ENCODE measurements at regions of chr1 and their contacts with region 1.

Region 1: DNA sequence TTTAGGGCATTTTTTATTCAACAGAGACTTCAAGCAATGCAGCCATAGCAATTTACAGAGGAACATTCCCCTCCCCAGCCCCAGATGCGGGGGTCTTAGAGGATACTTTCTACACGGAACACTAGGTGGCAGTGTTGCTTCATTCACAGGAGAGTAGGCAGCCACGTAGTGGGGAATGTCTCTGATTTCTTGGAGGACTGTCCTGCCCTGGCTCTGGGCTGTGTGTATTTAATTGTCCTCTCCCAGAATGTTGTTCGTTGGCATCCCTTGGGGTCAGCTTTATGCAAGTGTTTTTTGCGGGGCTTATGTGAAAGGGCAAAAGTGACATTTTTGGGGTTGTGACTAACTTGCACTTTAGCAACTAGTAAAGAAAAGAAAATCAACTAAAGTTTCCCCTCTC is 96.9 kb downstream of the PAPPA2 start:
- DNase-seq: peak in 1 of 2 donors; percentile 82
- H3K4me3 ChIP-seq: peak overlapping the region in 1 of 2 donors; percentile 11
- H3K27ac ChIP-seq: peak overlapping the region; percentile 53 to 65
- H3K4me1 ChIP-seq: peaks cover 3 to 15% of the 10 kb centered on the region in 2 donors
- H3K27me3 ChIP-seq: no peaks in the 10 kb centered on the region
- CTCF ChIP-seq: peak; percentile 79 to 98 (median 84)

Region 2: GRCh38 chr1:175192630-175193526 is 1367.0 kb before region 1 on chr1 and contains the start of gene KIAA0040:
- intact Hi-C with region 1: loop called (anchors 5 kb)
- DNase-seq: peak; percentile 37 to 91
- H3K4me3 ChIP-seq: peak within 1 kb of the TSS; percentile 58 to 77
- H3K27ac ChIP-seq: peak within 1 kb of the TSS; percentile 76 to 80
- H3K4me1 ChIP-seq: peaks cover 3 to 13% of the 10 kb centered on the region in 2 donors
- H3K27me3 ChIP-seq: no peaks in the 10 kb centered on the region
- CTCF ChIP-seq: peak in 2 of 3 experiments; percentile 17 to 30
- total RNA-seq, gene KIAA0040: 36.7 TPM

Region 3: DNA sequence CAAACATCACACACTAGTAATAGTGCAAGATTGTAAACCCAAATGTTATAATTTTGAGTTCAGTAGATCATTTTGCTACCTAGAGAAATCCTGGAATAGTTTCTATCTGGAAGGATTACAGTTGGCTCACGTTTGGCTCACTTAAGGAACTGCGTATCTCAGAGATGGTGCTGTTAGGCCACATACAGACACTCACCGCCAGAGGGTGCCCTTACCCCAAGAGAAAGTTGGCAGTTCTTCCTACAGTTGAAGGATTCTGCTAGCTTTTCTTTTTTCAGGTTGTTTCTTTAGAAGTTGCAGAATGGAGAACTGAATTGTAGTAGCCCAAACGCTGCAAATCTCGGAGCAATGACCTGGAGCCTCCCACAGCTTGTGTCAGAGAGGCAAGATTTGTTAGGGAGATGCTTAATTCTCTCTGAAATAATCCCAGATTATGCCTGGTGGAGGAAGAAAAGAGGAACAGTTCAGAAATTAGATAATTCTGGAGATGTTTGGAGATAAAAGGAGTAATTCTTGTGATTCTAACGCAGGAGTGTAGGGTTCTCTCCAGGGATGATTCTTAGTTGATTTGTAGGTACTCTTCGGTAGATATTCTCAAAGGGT is 184.8 kb before region 1 on chr1:
- intact Hi-C with region 1: loop called (anchors 5 kb)
- DNase-seq: peak in 1 of 2 donors; percentile 82
- H3K4me3 ChIP-seq: no peak overlapping the region
- H3K27ac ChIP-seq: no peak overlapping the region
- H3K4me1 ChIP-seq: no peaks in the 10 kb centered on the region
- H3K27me3 ChIP-seq: no peaks in the 10 kb centered on the region
- CTCF ChIP-seq: peak; percentile 41 to 74 (median 65)

Region 4: GRCh38 chr1:176656257-176656995 is 96.5 kb after region 1 on chr1:
- intact Hi-C with region 1: loop called (anchors 1 kb)
- DNase-seq: peak; percentile 9 to 86
- H3K4me3 ChIP-seq: peak overlapping the region in 1 of 2 donors; percentile 5
- H3K27ac ChIP-seq: peak overlapping the region; percentile 89 to 96
- H3K4me1 ChIP-seq: peaks cover 0 to 14% of the 10 kb centered on the region in 2 donors
- H3K27me3 ChIP-seq: no peaks in the 10 kb centered on the region
- CTCF ChIP-seq: peak in 2 of 3 experiments; percentile 26 to 33

Region 5: GRCh38 chr1:176691251-176692228 is 131.7 kb after region 1 on chr1:
- intact Hi-C with region 1: loop called (anchors 1 kb)
- DNase-seq: peak in 1 of 2 donors; percentile 66
- H3K4me3 ChIP-seq: no peak overlapping the region
- H3K27ac ChIP-seq: no peak overlapping the region
- H3K4me1 ChIP-seq: peaks cover 0 to 5% of the 10 kb centered on the region in 2 donors
- H3K27me3 ChIP-seq: no peaks in the 10 kb centered on the region
- CTCF ChIP-seq: peak; percentile 36 to 83 (median 73)

Region 6: GRCh38 chr1:176773038-176773437 is 213.2 kb after region 1 on chr1:
- intact Hi-C with region 1: no loop called
- DNase-seq: no peak
- H3K4me3 ChIP-seq: no peak overlapping the region
- H3K27ac ChIP-seq: no peak overlapping the region
- H3K4me1 ChIP-seq: no peaks in the 10 kb centered on the region
- H3K27me3 ChIP-seq: no peaks in the 10 kb centered on the region
- CTCF ChIP-seq: no peak

Region 7: GRCh38 chr1:176843352-176844297 is 283.7 kb after region 1 on chr1:
- intact Hi-C with region 1: loop called (anchors 1 kb)
- DNase-seq: peak in 1 of 2 donors; percentile 63
- H3K4me3 ChIP-seq: no peak overlapping the region
- H3K27ac ChIP-seq: no peak overlapping the region
- H3K4me1 ChIP-seq: no peaks in the 10 kb centered on the region
- H3K27me3 ChIP-seq: no peaks in the 10 kb centered on the region
- CTCF ChIP-seq: peak; percentile 52 to 66 (median 54)

Region 8: GRCh38 chr1:176880954-176881595 is 321.2 kb after region 1 on chr1:
- intact Hi-C with region 1: loop called (anchors 1 kb)
- DNase-seq: peak in 1 of 2 donors; percentile 78
- H3K4me3 ChIP-seq: no peak overlapping the region
- H3K27ac ChIP-seq: no peak overlapping the region
- H3K4me1 ChIP-seq: no peaks in the 10 kb centered on the region
- H3K27me3 ChIP-seq: no peaks in the 10 kb centered on the region
- CTCF ChIP-seq: peak; percentile 41 to 80 (median 64)

Measured in ascending aorta (tissue), 2 donors.